ENCODE measurements at regions of chr2 and their contacts with region 1.

Region 1: GRCh38 chr2:70094978-70095719 is 7.9 kb downstream of the PCBP1 start:
- DNase-seq: no peak
- ATAC-seq: peak; percentile 90
- H3K4me3 ChIP-seq: 0 out of 2 replicates have a peak overlapping the region, but pooled peaks have one; percentile 20
- H3K27ac ChIP-seq: peak overlapping the region; percentile 89
- H3K4me1 ChIP-seq: peaks cover 17% of the 10 kb centered on the region
- H3K27me3 ChIP-seq: no peaks in the 10 kb centered on the region
- CTCF ChIP-seq: no peak
- EP300 ChIP-seq: no peak
- POLR2A ChIP-seq: peak; percentile 51; the same call in 1 of the 2 replicates
- RAD21 ChIP-seq: no peak; the same call in 1 of the 2 replicates

Region 2: GRCh38 chr2:69975500-69976462 is 119.4 kb before region 1 on chr2:
- CTCF ChIA-PET with region 1: no interaction called
- POLR2A ChIA-PET with region 1: no interaction called
- RAD21 ChIA-PET with region 1: no interaction called
- SMC1A ChIA-PET with region 1: no interaction called
- in situ Hi-C with region 1: no loop called
- intact Hi-C with region 1: no loop called
- DNase-seq: no peak
- ATAC-seq: no peak
- H3K4me3 ChIP-seq: no peak overlapping the region
- H3K27ac ChIP-seq: no peak overlapping the region
- H3K4me1 ChIP-seq: no peaks in the 10 kb centered on the region
- H3K27me3 ChIP-seq: no peaks in the 10 kb centered on the region
- CTCF ChIP-seq: no peak
- EP300 ChIP-seq: no peak
- POLR2A ChIP-seq: no peak
- RAD21 ChIP-seq: no peak

Region 3: GRCh38 chr2:70124983-70125480 is 29.9 kb after region 1 on chr2:
- CTCF ChIA-PET with region 1: interaction called, 3 read pairs
- POLR2A ChIA-PET with region 1: interaction called, 187 read pairs
- RAD21 ChIA-PET with region 1: interaction called, 31 read pairs
- SMC1A ChIA-PET with region 1: interaction called, 28 read pairs
- in situ Hi-C with region 1: no loop called
- intact Hi-C with region 1: no loop called
- DNase-seq: no peak
- ATAC-seq: peak; percentile 61
- H3K4me3 ChIP-seq: peak overlapping the region; percentile 67
- H3K27ac ChIP-seq: peak overlapping the region; percentile 95
- H3K4me1 ChIP-seq: peaks cover 62% of the 10 kb centered on the region
- H3K27me3 ChIP-seq: no peaks in the 10 kb centered on the region
- CTCF ChIP-seq: no peak
- EP300 ChIP-seq: no peak; a peak in 1 of 4 replicates
- POLR2A ChIP-seq: peak; percentile 88
- RAD21 ChIP-seq: no peak

Region 4: GRCh38 chr2:70132244-70133126 is 37.3 kb after region 1 on chr2:
- CTCF ChIA-PET with region 1: interaction called, 9 read pairs
- POLR2A ChIA-PET with region 1: interaction called, 187 read pairs
- RAD21 ChIA-PET with region 1: interaction called, 181 read pairs
- SMC1A ChIA-PET with region 1: interaction called, 147 read pairs
- in situ Hi-C with region 1: loop called (anchors 5 kb)
- intact Hi-C with region 1: no loop called
- DNase-seq: no peak
- ATAC-seq: peak; percentile 63
- H3K4me3 ChIP-seq: peak overlapping the region; percentile 67
- H3K27ac ChIP-seq: peak overlapping the region; percentile 99
- H3K4me1 ChIP-seq: peaks cover 49% of the 10 kb centered on the region
- H3K27me3 ChIP-seq: no peaks in the 10 kb centered on the region
- CTCF ChIP-seq: no peak
- EP300 ChIP-seq: no peak
- POLR2A ChIP-seq: peak; percentile 73
- RAD21 ChIP-seq: no peak

Region 5: DNA sequence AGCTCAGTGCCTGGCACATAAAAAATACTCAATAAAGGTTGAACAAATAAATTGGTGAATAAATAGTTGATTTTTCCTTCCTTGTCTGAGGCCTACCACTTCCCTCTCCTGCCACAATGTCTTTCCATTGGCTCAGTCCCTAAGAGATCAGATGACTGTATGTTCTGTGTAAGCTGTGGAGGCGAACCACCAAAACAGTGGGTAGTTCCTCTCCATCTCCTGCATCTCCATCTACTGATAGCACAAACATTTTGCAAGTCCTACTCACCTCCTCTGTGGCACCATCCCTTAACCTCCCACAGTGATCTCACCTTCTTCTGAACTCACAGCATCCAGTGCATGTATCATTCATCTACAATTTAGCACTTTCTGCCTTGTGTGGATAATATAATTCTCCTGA is 42.4 kb after region 1 on chr2:
- CTCF ChIA-PET with region 1: interaction called, 9 read pairs
- POLR2A ChIA-PET with region 1: interaction called, 154 read pairs
- RAD21 ChIA-PET with region 1: interaction called, 181 read pairs
- SMC1A ChIA-PET with region 1: interaction called, 147 read pairs
- in situ Hi-C with region 1: loop called (anchors 5 kb)
- intact Hi-C with region 1: no loop called
- DNase-seq: no peak
- ATAC-seq: no peak
- H3K4me3 ChIP-seq: no peak overlapping the region
- H3K27ac ChIP-seq: no peak overlapping the region
- H3K4me1 ChIP-seq: peaks cover 48% of the 10 kb centered on the region
- H3K27me3 ChIP-seq: no peaks in the 10 kb centered on the region
- CTCF ChIP-seq: no peak
- EP300 ChIP-seq: no peak
- POLR2A ChIP-seq: no peak
- RAD21 ChIP-seq: no peak

Region 6: GRCh38 chr2:70726947-70727725 is 632.0 kb after region 1 on chr2:
- CTCF ChIA-PET with region 1: no interaction called
- POLR2A ChIA-PET with region 1: no interaction called
- RAD21 ChIA-PET with region 1: no interaction called
- SMC1A ChIA-PET with region 1: no interaction called
- in situ Hi-C with region 1: no loop called
- intact Hi-C with region 1: no loop called
- DNase-seq: no peak
- ATAC-seq: no peak
- H3K4me3 ChIP-seq: no peak overlapping the region
- H3K27ac ChIP-seq: no peak overlapping the region
- H3K4me1 ChIP-seq: no peaks in the 10 kb centered on the region
- H3K27me3 ChIP-seq: no peaks in the 10 kb centered on the region; a peak in 1 of 4 replicates
- CTCF ChIP-seq: no peak
- EP300 ChIP-seq: no peak
- POLR2A ChIP-seq: no peak
- RAD21 ChIP-seq: no peak

Measured in GM12878 (cell line).